ENCODE measurements at regions of chr1 and their contacts with region 1.

Region 1: GRCh38 chr1:108916788-108917187 is 40.0 kb downstream of the GPSM2 start:
- DNase-seq: no peak
- ATAC-seq: no peak
- H3K4me3 Mint-ChIP-seq: no peak overlapping the region
- H3K27ac Mint-ChIP-seq: no peak overlapping the region
- H3K4me1 Mint-ChIP-seq: peaks cover 0 to 2% (median 0%) of the 10 kb centered on the region in 4 donors
- H3K27me3 Mint-ChIP-seq: no peaks in the 10 kb centered on the region

Region 2: GRCh38 chr1:108792420-108792819 is 124.4 kb before region 1 on chr1:
- POLR2A ChIA-PET with region 1: interaction called, 10 read pairs
- DNase-seq: no peak
- ATAC-seq: no peak
- H3K4me3 Mint-ChIP-seq: peak overlapping the region in 1 of 10 donors; percentile 45
- H3K27ac Mint-ChIP-seq: no peak overlapping the region
- H3K4me1 Mint-ChIP-seq: no peaks in the 10 kb centered on the region
- H3K27me3 Mint-ChIP-seq: no peaks in the 10 kb centered on the region

Region 3: DNA sequence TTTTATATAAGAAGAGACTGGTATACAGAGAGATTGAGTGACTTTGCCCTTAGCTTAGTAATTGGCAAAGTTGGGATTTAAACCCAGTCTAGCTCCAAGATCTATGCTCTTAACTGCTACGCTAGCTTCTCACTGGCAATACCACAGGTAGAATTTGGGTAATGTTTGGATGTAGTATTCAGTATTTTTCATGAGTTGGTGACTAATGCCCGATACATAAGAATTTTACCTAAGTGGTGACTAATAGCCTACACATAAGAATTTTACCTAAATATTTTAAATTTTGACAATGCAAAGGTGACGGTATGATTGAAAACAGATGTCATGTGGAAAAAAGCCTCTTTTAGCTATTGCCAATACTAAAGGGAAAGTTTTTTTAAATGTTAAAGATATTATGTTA is 15.7 kb before region 1 on chr1:
- POLR2A ChIA-PET with region 1: no interaction called
- DNase-seq: no peak
- ATAC-seq: no peak
- H3K4me3 Mint-ChIP-seq: no peak overlapping the region
- H3K27ac Mint-ChIP-seq: no peak overlapping the region
- H3K4me1 Mint-ChIP-seq: peaks cover 0 to 3% (median under 1%) of the 10 kb centered on the region in 4 donors
- H3K27me3 Mint-ChIP-seq: peaks cover 0 to 5% (median 0%) of the 10 kb centered on the region in 5 donors

Measured in naive thymus-derived CD8-positive, alpha-beta T cell (primary cell).